Esophagus muscularis mucosa (tissue), 4 donors: ENCODE measurements at regions of chr4 and their contacts with region 1.

Region 1: DNA sequence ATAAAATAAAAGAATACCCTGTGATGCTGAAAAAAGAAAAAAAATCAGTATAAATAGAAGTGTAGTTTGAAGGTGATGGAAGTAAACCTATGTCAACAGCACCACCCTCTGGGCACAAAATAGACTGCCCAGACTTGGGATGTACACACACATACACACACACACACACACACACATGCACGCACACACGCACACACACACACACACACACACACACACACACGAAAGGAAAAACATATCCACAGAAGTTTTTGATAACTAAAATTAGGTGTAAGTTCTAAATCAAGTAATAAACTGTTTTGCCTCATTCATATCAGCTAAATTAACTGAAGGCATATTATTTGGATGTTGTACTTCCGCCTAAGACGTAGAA is 40.5 kb downstream of the ANXA5 start:
- DNase-seq: no peak
- H3K4me3 ChIP-seq: no peak overlapping the region
- H3K27ac ChIP-seq: no peak overlapping the region
- H3K4me1 ChIP-seq: peaks cover 0 to 11% (median 5%) of the 10 kb centered on the region in 4 donors
- H3K27me3 ChIP-seq: no peaks in the 10 kb centered on the region
- CTCF ChIP-seq: peak; percentile 28 to 60 (median 56)
- EP300 ChIP-seq: no peak
- POLR2A ChIP-seq: no peak

Region 2: DNA sequence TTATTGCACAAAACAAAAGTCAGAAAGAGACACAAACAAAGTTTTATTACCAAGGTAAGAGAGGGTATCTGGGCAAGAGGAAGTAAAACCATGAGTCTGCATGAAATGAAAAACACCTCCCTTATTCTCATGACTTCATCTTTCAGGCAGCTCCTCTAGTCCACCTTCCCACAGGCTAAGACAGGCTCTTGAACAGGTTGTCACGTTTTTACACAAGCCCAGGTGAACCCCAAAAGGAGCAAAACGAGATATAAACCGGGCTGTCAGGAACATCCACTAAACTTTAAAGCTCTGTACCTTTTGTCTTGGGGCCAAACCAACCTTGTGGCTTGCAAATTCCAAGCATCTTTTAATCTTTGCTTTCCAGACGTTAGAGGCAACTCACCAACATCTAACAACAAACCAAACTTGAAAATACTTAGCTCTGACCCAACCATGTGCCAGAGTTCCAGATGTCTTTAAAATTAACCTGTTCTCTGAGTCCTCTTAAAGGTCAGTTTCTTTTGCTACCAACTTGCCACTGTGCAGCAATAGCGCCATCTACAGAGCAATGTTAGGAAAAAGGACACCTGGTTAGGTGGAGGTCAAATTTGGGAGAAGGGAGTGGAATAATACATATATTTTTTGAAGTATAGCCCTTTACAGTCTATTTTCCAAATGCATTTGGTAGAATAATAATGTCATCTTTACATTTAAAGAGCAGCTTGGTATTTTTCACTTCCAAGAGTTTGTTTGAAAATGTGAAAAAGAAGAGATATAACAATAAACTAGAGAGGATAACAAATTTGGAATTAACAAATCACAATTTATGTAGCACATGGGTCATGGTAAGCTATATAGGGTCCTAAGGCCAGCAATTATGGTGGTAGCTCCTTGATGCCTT is 348.6 kb before region 1 on chr4:
- intact Hi-C with region 1: no loop called
- DNase-seq: no peak
- H3K4me3 ChIP-seq: no peak overlapping the region
- H3K27ac ChIP-seq: no peak overlapping the region
- H3K4me1 ChIP-seq: no peaks in the 10 kb centered on the region
- H3K27me3 ChIP-seq: no peaks in the 10 kb centered on the region
- CTCF ChIP-seq: peak in 1 of 3 experiments; percentile 6
- EP300 ChIP-seq: no peak
- POLR2A ChIP-seq: no peak

Region 3: DNA sequence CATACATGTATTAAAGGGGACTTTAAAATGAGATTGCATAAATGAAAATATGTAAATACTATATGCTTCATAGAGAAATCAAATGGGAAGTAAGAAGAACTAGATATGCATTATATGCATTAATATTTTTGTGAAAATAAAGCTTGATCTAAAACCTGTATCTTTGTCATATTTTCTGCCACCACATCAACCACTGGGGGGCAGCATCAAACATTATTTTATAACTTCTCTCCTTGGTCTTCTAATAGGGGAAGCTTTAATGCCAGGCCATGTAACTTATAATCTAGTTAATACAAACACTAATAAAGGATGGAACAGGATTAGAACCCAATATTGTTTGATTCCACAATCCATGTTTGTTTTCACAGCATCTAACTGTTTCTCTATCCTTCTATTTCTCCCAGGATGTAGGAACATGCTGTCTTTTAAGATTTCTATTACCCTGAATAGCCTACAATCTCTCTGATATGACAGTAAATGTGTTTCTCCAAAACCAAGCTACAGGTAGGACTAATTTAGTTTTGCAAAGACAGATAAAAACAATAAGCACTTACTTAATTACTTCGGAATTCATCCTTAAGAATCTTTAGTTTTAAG is 285.4 kb before region 1 on chr4:
- intact Hi-C with region 1: loop called (anchors 5 kb)
- DNase-seq: no peak
- H3K4me3 ChIP-seq: no peak overlapping the region
- H3K27ac ChIP-seq: no peak overlapping the region
- H3K4me1 ChIP-seq: no peaks in the 10 kb centered on the region
- H3K27me3 ChIP-seq: no peaks in the 10 kb centered on the region
- CTCF ChIP-seq: peak; percentile 50 to 67 (median 60)
- EP300 ChIP-seq: no peak
- POLR2A ChIP-seq: no peak

Region 4: GRCh38 chr4:121462660-121463261 is 193.5 kb before region 1 on chr4:
- intact Hi-C with region 1: loop called (anchors 10 kb)
- DNase-seq: no peak
- H3K4me3 ChIP-seq: no peak overlapping the region
- H3K27ac ChIP-seq: no peak overlapping the region
- H3K4me1 ChIP-seq: peaks cover 0 to 4% (median 0%) of the 10 kb centered on the region in 4 donors
- H3K27me3 ChIP-seq: no peaks in the 10 kb centered on the region
- CTCF ChIP-seq: peak; percentile 36 to 66 (median 51)
- EP300 ChIP-seq: no peak
- POLR2A ChIP-seq: no peak